Activated naive CD4-positive, alpha-beta T cell treated with anti-CD3 and anti-CD28 coated beads for 36 hours (primary cell): ENCODE measurements at regions of chr19 and their contacts with region 1.

Region 1: GRCh38 chr19:43562698-43563241 is 12.6 kb downstream of the XRCC1 start:
- DNase-seq: peak; percentile 88
- H3K4me3 Mint-ChIP-seq: peak overlapping the region; percentile 25
- H3K27ac Mint-ChIP-seq: peak overlapping the region; percentile 96
- H3K4me1 Mint-ChIP-seq: peaks cover 45% of the 10 kb centered on the region
- H3K27me3 Mint-ChIP-seq: no peaks in the 10 kb centered on the region

Region 2: DNA sequence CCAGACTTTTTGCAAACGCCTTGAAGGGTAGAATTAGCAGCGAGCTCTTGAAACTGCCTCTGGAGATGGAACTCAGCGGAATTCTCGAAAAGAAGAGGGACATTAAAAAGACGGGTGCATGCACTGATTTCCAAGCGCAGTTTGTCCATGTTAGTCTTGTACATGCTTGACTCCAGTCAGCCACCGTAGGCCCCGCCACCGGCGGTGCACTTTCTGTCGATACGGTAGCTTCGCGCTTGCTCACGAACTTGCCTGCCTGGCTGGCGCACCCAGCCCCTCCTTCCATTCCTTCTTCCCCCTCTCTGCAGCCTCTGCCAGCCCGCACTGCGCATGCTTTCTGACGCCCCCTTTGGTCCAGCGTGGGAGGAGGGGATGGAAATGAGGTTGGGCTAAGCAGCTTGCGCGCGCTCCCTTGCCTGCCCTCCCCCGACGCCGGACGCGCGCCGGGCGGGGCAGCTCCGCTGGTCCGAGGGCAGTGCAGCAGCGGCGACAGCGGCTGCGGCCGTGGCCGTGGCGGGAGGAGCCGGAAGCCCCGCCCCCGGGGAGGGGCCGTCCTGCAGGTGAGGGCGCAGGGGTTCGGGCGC is 29.7 kb before region 1 on chr19 and contains the start of gene ZNF575:
- CTCF ChIA-PET with region 1: no interaction called
- intact Hi-C with region 1: loop called (anchors 1 kb)
- DNase-seq: peak; percentile 92
- H3K4me3 Mint-ChIP-seq: peak within 1 kb of the TSS; percentile 80
- H3K27ac Mint-ChIP-seq: peak within 1 kb of the TSS; percentile 88
- H3K4me1 Mint-ChIP-seq: peaks cover 19% of the 10 kb centered on the region
- H3K27me3 Mint-ChIP-seq: no peaks in the 10 kb centered on the region
- total RNA-seq, gene ZNF575: 3.1 to 5.2 TPM

Region 3: DNA sequence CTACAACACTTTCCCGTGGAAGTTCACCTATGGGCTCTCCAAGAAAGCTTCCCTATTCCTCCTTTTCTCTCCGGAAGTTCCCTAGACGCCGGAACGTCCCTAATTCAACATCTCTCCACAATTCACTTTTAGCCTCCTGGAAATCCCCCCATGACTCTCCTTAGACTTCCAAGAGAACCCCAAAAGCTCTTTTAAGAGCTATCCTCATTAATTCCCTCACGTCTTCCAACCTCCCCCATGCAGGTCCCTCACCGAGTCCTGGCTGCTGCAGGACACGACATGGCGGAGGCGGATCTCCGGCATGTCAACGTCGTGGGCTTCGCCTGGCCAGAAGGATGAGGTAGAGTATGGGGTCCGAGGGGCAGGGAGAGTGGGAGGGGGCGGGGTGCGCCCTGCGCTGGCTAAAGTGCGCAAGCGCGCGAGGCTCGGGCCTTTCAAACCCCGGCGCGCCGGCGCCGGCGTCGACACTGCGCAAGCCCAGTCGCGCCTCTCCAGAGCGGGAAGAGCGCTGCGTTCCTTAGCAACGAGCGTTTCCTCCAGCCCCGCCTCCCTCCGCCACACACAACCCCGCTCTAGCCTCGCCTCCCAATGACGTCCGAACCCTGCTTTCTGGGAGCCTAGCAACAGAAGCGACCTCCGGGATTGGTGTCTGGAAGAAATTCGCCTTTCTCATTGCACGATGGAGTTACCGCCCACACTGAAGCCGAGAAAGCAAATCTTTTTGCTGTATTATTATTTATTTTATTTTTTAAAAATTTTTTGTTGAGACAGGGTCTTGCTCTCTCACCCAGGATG is 12.6 kb after region 1 on chr19 and contains the starts of genes PINLYP and XRCC1:
- CTCF ChIA-PET with region 1: interaction called, 7 read pairs
- intact Hi-C with region 1: loop called (anchors 1 kb)
- DNase-seq: peak; percentile 99
- H3K4me3 Mint-ChIP-seq: peak within 1 kb of the TSS; percentile 95
- H3K27ac Mint-ChIP-seq: peak within 1 kb of the TSS; percentile 94
- H3K4me1 Mint-ChIP-seq: peaks cover 37% of the 10 kb centered on the region
- H3K27me3 Mint-ChIP-seq: no peaks in the 10 kb centered on the region
- total RNA-seq, gene PINLYP: 3.2 to 3.8 TPM
- total RNA-seq, gene XRCC1: 33.7 to 34.5 TPM

Region 4: GRCh38 chr19:43581467-43581866 is 18.7 kb after region 1 on chr19:
- CTCF ChIA-PET with region 1: interaction called, 3 read pairs
- intact Hi-C with region 1: loop called (anchors 2 kb)
- DNase-seq: no peak
- H3K4me3 Mint-ChIP-seq: peak overlapping the region; percentile 9
- H3K27ac Mint-ChIP-seq: no peak overlapping the region
- H3K4me1 Mint-ChIP-seq: peaks cover 12% of the 10 kb centered on the region
- H3K27me3 Mint-ChIP-seq: no peaks in the 10 kb centered on the region

Region 5: GRCh38 chr19:43619262-43620060 is 56.7 kb after region 1 on chr19 and contains the start of gene ZNF428:
- CTCF ChIA-PET with region 1: no interaction called
- intact Hi-C with region 1: loop called (anchors 1 kb)
- DNase-seq: peak; percentile 90
- H3K4me3 Mint-ChIP-seq: peak within 1 kb of the TSS; percentile 94
- H3K27ac Mint-ChIP-seq: peak within 1 kb of the TSS; percentile 96
- H3K4me1 Mint-ChIP-seq: peaks cover 19% of the 10 kb centered on the region
- H3K27me3 Mint-ChIP-seq: no peaks in the 10 kb centered on the region
- total RNA-seq, gene ZNF428: 11.4 to 11.8 TPM

Region 6: DNA sequence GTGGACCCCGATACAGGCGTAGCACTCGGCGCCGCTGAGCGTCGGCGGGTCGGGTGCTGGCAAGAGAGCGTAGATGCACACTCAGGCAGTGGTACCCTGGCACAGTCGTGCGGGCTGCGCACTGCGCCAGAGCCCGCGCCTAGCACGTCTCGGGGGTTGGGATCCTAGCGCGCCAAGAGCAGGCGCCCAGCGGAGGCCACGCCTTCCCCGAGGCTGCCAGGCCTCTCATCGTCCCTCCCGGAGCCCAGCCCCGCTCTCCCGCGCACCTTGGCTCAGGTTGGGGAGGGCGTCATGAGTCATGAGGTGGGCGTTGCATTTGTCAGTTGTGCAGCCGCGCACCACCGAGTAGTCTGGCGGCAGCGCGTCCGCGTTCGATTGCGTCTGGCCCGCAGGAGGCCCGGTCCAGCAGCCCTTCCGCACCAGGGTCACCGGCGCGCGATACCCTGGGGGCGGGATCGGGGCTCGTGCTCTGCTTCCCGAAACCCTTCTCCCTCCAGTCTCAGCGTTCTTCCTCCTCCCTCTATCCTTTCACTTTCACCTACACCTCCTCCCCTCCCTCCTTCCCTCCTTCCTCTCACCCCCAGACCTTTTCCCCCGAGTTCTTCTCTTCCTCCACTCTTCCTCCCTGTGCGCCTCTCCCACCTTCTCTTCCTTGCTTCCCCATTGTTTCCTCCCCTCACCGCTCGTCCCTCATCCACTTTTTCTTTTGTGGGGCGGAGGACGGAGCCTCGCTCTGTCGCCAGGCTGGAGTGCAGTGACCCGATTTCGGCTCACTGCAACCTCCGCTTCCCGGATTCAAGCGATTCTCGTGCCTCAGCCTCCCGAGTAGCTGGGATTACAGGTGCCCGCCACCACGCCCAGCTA is 236.0 kb after region 1 on chr19:
- CTCF ChIA-PET with region 1: no interaction called
- intact Hi-C with region 1: no loop called
- DNase-seq: peak; percentile 85
- H3K4me3 Mint-ChIP-seq: peak overlapping the region; percentile 69
- H3K27ac Mint-ChIP-seq: no peak overlapping the region
- H3K4me1 Mint-ChIP-seq: peaks cover 11% of the 10 kb centered on the region
- H3K27me3 Mint-ChIP-seq: peaks cover 8% of the 10 kb centered on the region